Activated T-helper 2 cell treated with anti-CD3 and anti-CD28 coated beads, Interferon-gamma antibody, Interleukin-2, Interleukin-4, amounts not matched to agents 10 μg/mL and 5 μg/mL and 100 μg/mL, durations not matched to agents 14 hours and 24 hours and 36 hours (primary cell): ENCODE measurements at regions of chr18 and their contacts with region 1.

Region 1: DNA sequence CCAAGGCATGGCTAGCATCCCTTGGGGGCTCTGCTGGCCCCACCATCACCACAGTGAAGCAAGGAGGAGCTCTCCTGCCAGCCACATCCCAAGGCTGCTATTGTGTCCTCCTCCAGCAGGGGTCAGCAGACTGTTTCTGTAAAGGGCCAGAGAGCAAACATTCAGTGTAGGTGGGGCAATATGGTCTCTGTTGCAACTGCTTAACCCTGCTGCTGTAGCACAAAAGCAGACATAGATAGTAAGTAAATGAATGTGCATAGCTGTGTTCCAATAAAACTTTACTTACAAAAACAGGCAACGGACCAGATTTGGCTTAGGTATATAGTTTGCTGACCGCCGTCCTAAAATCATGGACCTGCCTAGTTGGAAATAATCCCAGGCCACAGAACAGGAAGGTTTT is 36.4 kb upstream of the ZBTB7C start:
- DNase-seq: peak; percentile 57
- H3K4me3 Mint-ChIP-seq: no peak overlapping the region
- H3K27ac Mint-ChIP-seq: no peak overlapping the region
- H3K4me1 Mint-ChIP-seq: peaks cover 2% of the 10 kb centered on the region
- H3K27me3 Mint-ChIP-seq: peaks cover 41% of the 10 kb centered on the region

Region 2: GRCh38 chr18:48022531-48023329 is 422.8 kb before region 1 on chr18:
- intact Hi-C with region 1: loop called (anchors 5 kb)
- DNase-seq: no peak
- H3K4me3 Mint-ChIP-seq: no peak overlapping the region
- H3K27ac Mint-ChIP-seq: no peak overlapping the region
- H3K4me1 Mint-ChIP-seq: peaks cover 5% of the 10 kb centered on the region
- H3K27me3 Mint-ChIP-seq: peaks cover 28% of the 10 kb centered on the region

Region 3: GRCh38 chr18:48470484-48471180 is 25.1 kb after region 1 on chr18:
- intact Hi-C with region 1: loop called (anchors 1 kb)
- DNase-seq: no peak
- H3K4me3 Mint-ChIP-seq: no peak overlapping the region
- H3K27ac Mint-ChIP-seq: no peak overlapping the region
- H3K4me1 Mint-ChIP-seq: no peaks in the 10 kb centered on the region
- H3K27me3 Mint-ChIP-seq: peaks cover 25% of the 10 kb centered on the region